Left ventricle myocardium inferior (tissue), 1 donor: ENCODE measurements at regions of chr11 and their contacts with region 1.

Region 1: DNA sequence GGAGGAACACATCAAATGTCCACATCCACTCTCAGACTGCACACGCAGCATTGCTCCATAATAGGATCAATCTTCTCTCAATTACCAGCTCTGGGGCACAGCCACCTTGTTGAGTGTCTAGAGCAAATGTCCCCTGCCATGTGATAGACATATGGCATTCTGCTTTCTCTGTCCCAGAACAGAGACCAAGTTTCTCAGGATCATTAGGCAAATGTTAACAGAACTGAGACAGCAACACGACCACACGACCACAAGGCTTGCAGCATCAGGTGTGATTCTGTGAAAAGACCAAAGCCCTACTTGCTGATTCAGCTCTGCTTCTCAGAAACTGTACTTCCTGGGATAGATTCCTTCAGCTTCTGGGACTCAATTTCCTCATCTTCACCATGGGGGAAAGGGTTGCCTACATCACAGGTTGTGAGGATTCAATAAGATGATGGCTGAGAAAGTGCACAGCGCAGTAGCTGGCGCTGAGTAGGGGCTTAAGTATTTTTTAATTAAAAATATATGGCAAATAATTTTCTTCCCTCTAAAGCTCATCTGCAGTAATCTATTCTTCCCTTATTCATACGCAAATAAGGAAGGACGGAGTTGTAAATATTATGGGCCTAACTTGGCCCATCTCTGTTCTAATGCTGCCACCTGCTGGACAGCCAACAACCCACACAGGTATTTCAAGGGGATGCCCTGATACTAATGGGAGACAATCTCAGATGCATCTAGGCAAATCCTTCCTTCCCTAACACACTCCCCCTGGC is 54.3 kb upstream of the USP47 start:
- DNase-seq: peak; percentile 53
- H3K4me3 ChIP-seq: no peak overlapping the region
- H3K27ac ChIP-seq: no peak overlapping the region
- H3K4me1 ChIP-seq: peaks cover 4% of the 10 kb centered on the region
- H3K27me3 ChIP-seq: no peaks in the 10 kb centered on the region
- CTCF ChIP-seq: peak; percentile 91

Region 2: DNA sequence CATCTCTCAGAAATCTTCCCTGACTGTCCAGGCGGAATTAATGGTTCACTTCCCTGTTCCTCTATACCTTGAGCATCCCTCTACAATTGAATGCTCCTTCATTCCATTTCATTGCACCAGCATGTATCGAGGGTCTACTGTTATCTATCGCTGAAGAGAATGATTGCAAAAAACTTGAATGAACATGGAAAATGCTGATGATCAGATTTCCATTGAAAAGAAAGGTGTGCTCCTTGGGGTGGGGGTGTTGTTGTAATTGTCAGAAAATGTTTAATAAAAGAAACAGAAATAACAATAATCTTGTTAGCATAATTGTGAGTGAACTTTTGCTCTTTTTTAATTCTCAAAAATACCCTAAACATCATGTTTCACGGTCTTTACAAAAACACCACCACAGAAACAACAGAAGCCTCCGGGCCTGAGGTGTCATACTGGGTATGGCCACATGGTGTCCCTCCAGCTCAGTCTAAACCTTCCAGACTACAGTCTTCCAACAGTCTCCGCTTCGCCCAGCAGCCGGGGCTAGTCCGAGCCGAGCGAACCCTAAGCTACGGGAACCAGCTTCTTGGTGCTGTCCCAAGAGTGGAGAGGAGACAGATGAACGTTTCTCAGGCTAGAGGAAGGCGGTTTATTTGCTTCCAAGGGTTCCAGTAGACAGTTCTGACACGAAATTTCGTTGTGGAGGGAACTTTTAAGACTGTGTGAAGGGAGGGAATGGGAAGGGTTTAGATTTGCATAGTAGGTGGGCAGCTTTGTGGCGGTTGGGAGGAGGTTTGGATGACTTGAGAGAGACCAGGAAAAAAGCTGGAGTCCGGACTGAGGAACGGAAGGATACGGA is 853.8 kb before region 1 on chr11:
- intact Hi-C with region 1: loop called (anchors 10 kb)
- DNase-seq: peak; percentile 87
- H3K4me3 ChIP-seq: peak overlapping the region; percentile 65
- H3K27ac ChIP-seq: peak overlapping the region; percentile 79
- H3K4me1 ChIP-seq: peaks cover 36% of the 10 kb centered on the region
- H3K27me3 ChIP-seq: no peaks in the 10 kb centered on the region
- CTCF ChIP-seq: peak; percentile 98

Region 3: DNA sequence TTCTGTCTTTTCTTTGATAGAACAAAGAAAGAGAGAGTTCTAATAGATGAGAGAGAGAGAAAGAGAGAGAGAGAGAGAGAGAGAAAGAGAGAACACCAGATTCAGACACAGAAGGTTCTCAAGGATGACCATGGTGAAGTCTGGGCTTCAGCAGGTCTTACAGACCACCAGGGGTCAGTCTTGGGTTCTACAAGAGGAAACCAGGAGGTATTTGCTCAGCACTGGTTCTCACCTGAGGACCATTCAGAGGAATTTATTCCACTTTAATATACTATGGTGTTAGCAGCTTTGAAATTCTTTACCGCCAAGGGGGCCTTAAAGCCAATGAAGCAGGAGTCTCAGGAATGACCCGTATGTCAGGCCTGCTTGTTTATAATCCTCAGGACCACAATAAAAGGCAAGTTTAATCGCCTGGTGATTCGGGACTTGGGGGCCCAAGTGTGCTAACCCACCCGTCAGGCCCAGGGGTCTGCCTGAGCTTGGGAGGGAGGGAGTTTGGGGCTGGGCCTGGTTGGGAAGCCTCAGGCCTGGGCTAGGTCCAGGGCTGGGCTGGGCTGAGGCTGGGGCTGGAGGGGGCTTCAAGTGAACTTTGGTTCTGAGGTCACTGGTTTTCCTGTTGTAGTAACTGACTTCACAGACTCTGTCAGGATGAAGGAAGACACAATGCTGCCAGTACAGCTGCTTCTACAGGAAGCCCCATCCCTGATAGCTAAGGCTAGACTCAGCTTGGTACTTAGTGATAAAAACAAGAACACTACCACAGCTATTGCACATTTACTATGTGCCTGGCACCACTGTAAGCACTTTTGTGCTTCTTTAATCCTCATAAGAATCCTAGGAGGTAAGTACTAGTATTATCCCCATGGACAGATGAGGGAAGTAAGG is 750.4 kb before region 1 on chr11:
- intact Hi-C with region 1: loop called (anchors 2 kb)
- DNase-seq: no peak
- H3K4me3 ChIP-seq: no peak overlapping the region
- H3K27ac ChIP-seq: no peak overlapping the region
- H3K4me1 ChIP-seq: no peaks in the 10 kb centered on the region
- H3K27me3 ChIP-seq: no peaks in the 10 kb centered on the region
- CTCF ChIP-seq: peak; percentile 83